Heart left ventricle (tissue), 16 donors: ENCODE measurements at regions of chr11 and their contacts with region 1.

Region 1: GRCh38 chr11:7775689-7776088 is 21.1 kb downstream of the OR5P2 start:
- DNase-seq: no peak
- ATAC-seq: no peak
- H3K4me3 ChIP-seq: no peak overlapping the region
- H3K27ac ChIP-seq: no peak overlapping the region
- H3K4me1 ChIP-seq: no peaks in the 10 kb centered on the region
- H3K27me3 ChIP-seq: no peaks in the 10 kb centered on the region
- CTCF ChIP-seq: no peak
- POLR2A ChIP-seq: no peak

Region 2: GRCh38 chr11:7714786-7715185 is 60.9 kb before region 1 on chr11:
- intact Hi-C with region 1: no loop called
- DNase-seq: no peak
- ATAC-seq: no peak
- H3K4me3 ChIP-seq: no peak overlapping the region
- H3K27ac ChIP-seq: no peak overlapping the region
- H3K4me1 ChIP-seq: no peaks in the 10 kb centered on the region
- H3K27me3 ChIP-seq: peaks cover 0 to 3% (median 0%) of the 10 kb centered on the region in 9 donors
- CTCF ChIP-seq: no peak
- POLR2A ChIP-seq: no peak

Region 3: DNA sequence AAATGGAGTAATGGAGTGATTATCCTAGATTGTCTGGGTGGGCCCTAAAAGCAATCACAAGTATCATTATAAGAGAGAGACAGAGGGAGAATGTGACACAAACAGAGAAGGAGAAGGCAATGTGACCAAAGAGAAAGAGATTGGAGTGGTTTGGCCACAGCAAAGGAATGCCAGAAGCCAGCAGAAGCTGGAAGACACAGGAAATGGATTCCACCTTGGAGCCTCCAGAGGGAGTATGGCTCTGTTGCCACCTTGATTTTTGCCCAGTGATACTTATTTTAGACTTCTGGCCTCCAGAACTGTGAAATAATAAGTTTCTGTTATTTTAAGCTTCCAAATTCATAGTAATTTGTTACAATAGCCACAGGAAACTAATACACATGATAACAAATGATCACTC is 57.8 kb after region 1 on chr11:
- intact Hi-C with region 1: loop called in 1 of 10 experiments (anchors 10 kb)
- DNase-seq: no peak
- ATAC-seq: no peak
- H3K4me3 ChIP-seq: no peak overlapping the region
- H3K27ac ChIP-seq: no peak overlapping the region
- H3K4me1 ChIP-seq: no peaks in the 10 kb centered on the region
- H3K27me3 ChIP-seq: peaks cover 0 to 6% (median 0%) of the 10 kb centered on the region in 9 donors
- CTCF ChIP-seq: no peak
- POLR2A ChIP-seq: no peak